ENCODE measurements at regions of chr18 and their contacts with region 1.

Region 1: GRCh38 chr18:47283476-47283875 is 32.0 kb upstream of the SKOR2 start:
- DNase-seq: peak; percentile 42
- ATAC-seq: peak; percentile 64
- H3K4me3 ChIP-seq: no peak overlapping the region
- H3K27ac ChIP-seq: no peak overlapping the region
- H3K4me1 ChIP-seq: no peaks in the 10 kb centered on the region
- H3K27me3 ChIP-seq: no peaks in the 10 kb centered on the region
- CTCF ChIP-seq: peak; percentile 53

Region 2: GRCh38 chr18:47050468-47050867 is 233.0 kb before region 1 on chr18:
- CTCF ChIA-PET with region 1: no interaction called
- POLR2A ChIA-PET with region 1: no interaction called
- intact Hi-C with region 1: loop called (anchors 2 kb)
- DNase-seq: peak; percentile 37
- ATAC-seq: no peak
- H3K4me3 ChIP-seq: no peak overlapping the region
- H3K27ac ChIP-seq: no peak overlapping the region
- H3K4me1 ChIP-seq: no peaks in the 10 kb centered on the region
- H3K27me3 ChIP-seq: no peaks in the 10 kb centered on the region
- CTCF ChIP-seq: peak; percentile 66; the same call in 1 of the 2 replicates

Region 3: DNA sequence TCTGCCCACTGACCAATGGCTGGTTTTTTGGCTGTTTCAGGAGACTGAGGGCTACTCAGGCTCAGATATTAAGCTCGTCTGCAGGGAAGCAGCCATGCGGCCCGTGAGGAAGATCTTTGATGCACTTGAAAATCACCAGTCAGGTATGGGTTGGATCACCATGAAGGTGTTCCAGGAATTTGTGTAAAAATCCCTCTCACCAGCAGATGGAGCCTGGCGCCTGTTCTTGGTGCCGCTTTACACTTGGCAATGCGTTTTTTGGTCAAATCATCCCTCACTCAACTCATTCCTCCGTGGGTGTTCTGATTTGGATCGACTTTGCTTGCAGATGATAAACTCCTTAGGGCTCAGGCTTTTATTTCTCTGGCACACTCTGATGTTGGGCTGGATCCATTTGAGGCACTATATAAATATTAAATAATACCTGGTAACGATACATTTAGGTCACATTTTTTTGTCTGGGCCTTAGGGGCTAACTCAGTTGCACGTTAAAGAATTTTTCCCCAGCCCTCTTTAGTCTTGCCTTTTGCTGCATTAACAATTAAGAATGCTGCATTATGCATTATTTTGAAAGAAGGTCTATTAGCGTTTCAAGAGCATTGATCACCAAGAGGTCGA is 183.2 kb before region 1 on chr18:
- CTCF ChIA-PET with region 1: no interaction called
- POLR2A ChIA-PET with region 1: no interaction called
- intact Hi-C with region 1: loop called (anchors 5 kb)
- DNase-seq: peak; percentile 61
- ATAC-seq: peak; percentile 87
- H3K4me3 ChIP-seq: no peak overlapping the region
- H3K27ac ChIP-seq: no peak overlapping the region
- H3K4me1 ChIP-seq: no peaks in the 10 kb centered on the region
- H3K27me3 ChIP-seq: no peaks in the 10 kb centered on the region
- CTCF ChIP-seq: peak; percentile 63

Region 4: GRCh38 chr18:47215554-47216138 is 67.8 kb before region 1 on chr18:
- CTCF ChIA-PET with region 1: no interaction called
- POLR2A ChIA-PET with region 1: no interaction called
- intact Hi-C with region 1: loop called (anchors 1 kb)
- DNase-seq: peak; percentile 37
- ATAC-seq: peak; percentile 73
- H3K4me3 ChIP-seq: no peak overlapping the region
- H3K27ac ChIP-seq: no peak overlapping the region
- H3K4me1 ChIP-seq: no peaks in the 10 kb centered on the region
- H3K27me3 ChIP-seq: peaks cover 20% of the 10 kb centered on the region
- CTCF ChIP-seq: peak; percentile 54

Measured in PC-3 (cell line).